Naive thymus-derived CD4-positive, alpha-beta T cell (primary cell): ENCODE measurements at regions of chr14 and their contacts with region 1.

Region 1: DNA sequence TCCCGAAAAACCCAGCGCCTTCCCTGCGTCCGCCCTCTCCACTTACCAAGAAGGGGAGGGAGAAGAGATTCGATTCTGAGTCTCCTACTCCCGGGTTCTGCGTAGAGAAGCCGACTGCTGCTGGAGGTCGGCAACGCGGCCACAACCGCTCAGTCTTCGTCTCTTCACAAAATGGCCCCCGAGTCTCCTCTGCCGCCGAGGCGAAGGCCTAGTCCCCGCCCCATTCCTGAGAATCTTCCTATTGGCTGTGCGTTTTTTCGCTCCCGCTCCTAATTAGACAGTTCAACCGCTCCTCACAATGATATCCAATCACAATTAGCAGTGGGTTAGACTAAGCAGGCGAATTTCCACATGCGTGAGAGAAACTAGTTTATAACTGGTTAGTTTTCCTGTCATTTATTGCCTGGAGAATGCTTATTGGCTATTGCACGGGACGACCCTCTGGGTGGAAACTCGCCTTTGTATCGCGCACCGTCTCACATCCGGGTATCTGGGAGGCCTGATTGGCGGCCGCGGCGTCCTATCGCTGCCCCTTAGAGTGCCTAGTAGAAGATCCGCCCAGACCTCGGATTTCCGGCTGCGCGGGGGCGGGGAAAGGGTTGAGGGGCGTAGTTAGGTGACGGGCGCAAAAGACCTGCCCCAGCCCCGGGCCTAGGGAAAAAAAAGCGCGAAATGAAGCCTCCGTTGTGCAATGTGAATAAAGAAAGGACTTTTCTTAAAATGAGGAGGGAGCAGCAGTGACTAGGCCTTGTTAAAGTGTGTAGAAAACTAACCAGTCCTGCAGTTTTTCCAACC is at the start of gene HNRNPC:
- DNase-seq: peak; percentile 100
- ATAC-seq: peak; percentile 90
- H3K4me3 ChIP-seq: peak within 1 kb of the TSS; percentile 99
- H3K4me3 Mint-ChIP-seq: peak within 1 kb of the TSS; percentile 92 to 100 (median 99)
- H3K27ac ChIP-seq: peak within 1 kb of the TSS; percentile 97
- H3K27ac Mint-ChIP-seq: peak within 1 kb of the TSS; percentile 97 to 100 (median 100)
- H3K4me1 ChIP-seq: peaks cover 19 to 21% of the 10 kb centered on the region in 2 donors
- H3K4me1 Mint-ChIP-seq: peaks cover 21 to 43% (median 37%) of the 10 kb centered on the region in 7 donors
- H3K27me3 ChIP-seq: no peaks in the 10 kb centered on the region
- H3K27me3 Mint-ChIP-seq: no peaks in the 10 kb centered on the region
- total RNA-seq, gene HNRNPC: 469 to 687 (median 532) TPM

Region 2: DNA sequence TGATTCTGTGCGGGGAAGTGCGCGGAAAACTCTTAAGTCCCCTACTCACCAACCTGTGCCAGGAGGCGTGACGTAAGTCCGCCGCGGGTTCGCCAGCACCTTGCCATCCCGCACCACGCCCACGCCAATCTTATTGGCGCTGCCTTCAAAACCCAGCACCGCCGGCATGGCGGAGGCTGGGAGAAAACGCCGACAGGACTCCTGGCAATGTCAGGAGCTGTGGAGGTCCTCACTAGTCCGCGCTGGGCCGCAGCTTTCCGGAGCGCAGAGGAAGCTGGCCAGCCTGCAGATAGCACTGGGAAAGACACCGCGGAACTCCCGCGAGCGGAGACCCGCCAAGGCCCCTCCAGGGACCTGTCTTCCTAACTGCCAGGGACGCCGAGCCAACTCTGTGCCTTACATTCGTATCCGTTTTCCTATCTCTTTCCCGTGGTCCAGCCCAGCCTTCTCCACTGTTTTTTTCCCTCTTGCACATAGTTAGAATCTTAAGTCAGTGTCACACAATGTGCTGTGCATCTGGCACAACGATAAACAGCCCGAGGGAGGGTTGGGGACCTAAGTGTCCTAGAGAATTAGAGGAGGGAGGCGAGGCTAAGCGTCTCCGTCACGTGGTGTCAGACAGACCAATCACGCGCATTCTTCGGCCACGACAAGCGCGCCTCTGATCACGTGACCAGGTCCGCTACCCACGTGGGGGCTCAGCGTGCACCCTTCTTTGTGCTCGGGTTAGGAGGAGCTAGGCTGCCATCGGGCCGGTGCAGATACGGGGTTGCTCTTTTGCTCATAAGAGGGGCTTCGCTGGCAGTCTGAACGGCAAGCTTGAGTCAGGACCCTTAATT is 814.7 kb before region 1 on chr14 and contains the starts of genes APEX1 and OSGEP:
- CTCF ChIA-PET with region 1: no interaction called
- POLR2A ChIA-PET with region 1: no interaction called
- intact Hi-C with region 1: loop called in 1 of 2 experiments (anchors 1 kb)
- DNase-seq: peak; percentile 86 to 99 (median 98)
- ATAC-seq: peak; percentile 88
- H3K4me3 ChIP-seq: peak within 1 kb of the TSS; percentile 80
- H3K4me3 Mint-ChIP-seq: peak within 1 kb of the TSS in 6 of 10 donors; percentile 7 to 43 (median 30)
- H3K27ac ChIP-seq: peak within 1 kb of the TSS; percentile 85
- H3K27ac Mint-ChIP-seq: no peak within 1 kb of the TSS
- H3K4me1 ChIP-seq: peaks cover 13 to 18% of the 10 kb centered on the region in 2 donors
- H3K4me1 Mint-ChIP-seq: peaks cover 12 to 30% (median 19%) of the 10 kb centered on the region in 7 donors
- H3K27me3 ChIP-seq: no peaks in the 10 kb centered on the region
- H3K27me3 Mint-ChIP-seq: no peaks in the 10 kb centered on the region
- total RNA-seq, gene APEX1: 97.4 to 159 (median 129) TPM
- total RNA-seq, gene OSGEP: 54.2 to 77.2 (median 69.1) TPM

Region 3: GRCh38 chr14:21103710-21104447 is 165.6 kb before region 1 on chr14:
- CTCF ChIA-PET with region 1: no interaction called
- POLR2A ChIA-PET with region 1: no interaction called
- intact Hi-C with region 1: loop called (anchors 1 kb)
- DNase-seq: peak; percentile 87 to 94 (median 92)
- ATAC-seq: peak; percentile 92
- H3K4me3 ChIP-seq: peak overlapping the region; percentile 94
- H3K4me3 Mint-ChIP-seq: peak overlapping the region; percentile 74 to 99 (median 91)
- H3K27ac ChIP-seq: peak overlapping the region; percentile 96
- H3K27ac Mint-ChIP-seq: peak overlapping the region; percentile 25 to 97 (median 89)
- H3K4me1 ChIP-seq: peaks cover 3 to 8% of the 10 kb centered on the region in 2 donors
- H3K4me1 Mint-ChIP-seq: peaks cover 23 to 41% (median 26%) of the 10 kb centered on the region in 7 donors
- H3K27me3 ChIP-seq: peaks cover 0 to 4% of the 10 kb centered on the region in 2 donors
- H3K27me3 Mint-ChIP-seq: peaks cover 0 to 11% (median 0%) of the 10 kb centered on the region in 5 donors

Region 4: DNA sequence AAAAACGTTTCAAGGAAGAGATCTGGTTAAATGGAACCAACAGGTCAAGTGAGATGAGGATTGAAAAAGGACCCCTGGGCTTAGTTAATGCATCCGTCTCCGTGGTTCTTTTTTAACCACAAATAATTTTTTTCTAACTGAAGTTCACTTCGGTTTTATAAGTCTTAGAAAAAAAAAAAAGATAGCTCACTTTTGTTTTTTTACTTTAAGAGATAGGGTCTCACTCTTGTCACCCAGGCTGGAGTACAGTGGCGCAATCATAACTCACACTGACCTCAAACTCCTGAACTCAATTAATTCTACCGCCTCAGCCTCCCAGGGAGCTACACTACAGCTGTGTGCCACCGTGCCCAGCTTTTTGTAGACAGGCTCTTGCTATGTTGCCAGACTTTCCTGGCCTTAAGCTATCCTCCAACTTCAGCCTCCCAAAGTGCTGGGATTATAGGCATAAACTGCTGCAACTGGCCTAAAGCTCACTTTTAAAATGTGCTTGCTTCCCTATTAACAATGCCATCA is 12.0 kb before region 1 on chr14:
- CTCF ChIA-PET with region 1: interaction called, 3 read pairs
- POLR2A ChIA-PET with region 1: interaction called, 75 read pairs
- intact Hi-C with region 1: no loop called
- DNase-seq: no peak
- ATAC-seq: peak; percentile 30
- H3K4me3 ChIP-seq: peak overlapping the region; percentile 22
- H3K4me3 Mint-ChIP-seq: peak overlapping the region; percentile 64 to 79 (median 69)
- H3K27ac ChIP-seq: peak overlapping the region; percentile 10
- H3K27ac Mint-ChIP-seq: peak overlapping the region in 8 of 9 donors; percentile 44 to 84 (median 62)
- H3K4me1 ChIP-seq: peaks cover 58 to 59% of the 10 kb centered on the region in 2 donors
- H3K4me1 Mint-ChIP-seq: peaks cover 53 to 84% (median 68%) of the 10 kb centered on the region in 7 donors
- H3K27me3 ChIP-seq: no peaks in the 10 kb centered on the region
- H3K27me3 Mint-ChIP-seq: no peaks in the 10 kb centered on the region

Region 5: GRCh38 chr14:21437063-21437901 is 167.8 kb after region 1 on chr14:
- CTCF ChIA-PET with region 1: interaction called, 3 read pairs
- POLR2A ChIA-PET with region 1: interaction called, 4 read pairs
- intact Hi-C with region 1: loop called (anchors 1 kb)
- DNase-seq: peak; percentile 93 to 100 (median 99)
- ATAC-seq: peak; percentile 100
- H3K4me3 ChIP-seq: peak overlapping the region; percentile 87
- H3K4me3 Mint-ChIP-seq: peak overlapping the region; percentile 86 to 97 (median 92)
- H3K27ac ChIP-seq: peak overlapping the region; percentile 94
- H3K27ac Mint-ChIP-seq: peak overlapping the region; percentile 90 to 98 (median 94)
- H3K4me1 ChIP-seq: peaks cover 13 to 22% of the 10 kb centered on the region in 2 donors
- H3K4me1 Mint-ChIP-seq: peaks cover 43 to 86% (median 68%) of the 10 kb centered on the region in 7 donors
- H3K27me3 ChIP-seq: no peaks in the 10 kb centered on the region
- H3K27me3 Mint-ChIP-seq: no peaks in the 10 kb centered on the region

Region 6: GRCh38 chr14:21510735-21511657 is 241.5 kb after region 1 on chr14 and contains the start of gene METTL3:
- CTCF ChIA-PET with region 1: no interaction called
- POLR2A ChIA-PET with region 1: interaction called, 3 read pairs
- intact Hi-C with region 1: loop called (anchors 1 kb)
- DNase-seq: peak; percentile 78 to 95 (median 90)
- ATAC-seq: peak; percentile 100
- H3K4me3 ChIP-seq: peak within 1 kb of the TSS; percentile 94
- H3K4me3 Mint-ChIP-seq: peak within 1 kb of the TSS; percentile 92 to 100 (median 99)
- H3K27ac ChIP-seq: peak within 1 kb of the TSS; percentile 87
- H3K27ac Mint-ChIP-seq: peak within 1 kb of the TSS; percentile 97 to 99 (median 98)
- H3K4me1 ChIP-seq: peaks cover 15 to 21% of the 10 kb centered on the region in 2 donors
- H3K4me1 Mint-ChIP-seq: peaks cover 20 to 47% (median 42%) of the 10 kb centered on the region in 7 donors
- H3K27me3 ChIP-seq: no peaks in the 10 kb centered on the region
- H3K27me3 Mint-ChIP-seq: peaks cover 0 to 1% (median 0%) of the 10 kb centered on the region in 5 donors
- total RNA-seq, gene METTL3: 43.6 to 108 (median 75.3) TPM

Region 7: DNA sequence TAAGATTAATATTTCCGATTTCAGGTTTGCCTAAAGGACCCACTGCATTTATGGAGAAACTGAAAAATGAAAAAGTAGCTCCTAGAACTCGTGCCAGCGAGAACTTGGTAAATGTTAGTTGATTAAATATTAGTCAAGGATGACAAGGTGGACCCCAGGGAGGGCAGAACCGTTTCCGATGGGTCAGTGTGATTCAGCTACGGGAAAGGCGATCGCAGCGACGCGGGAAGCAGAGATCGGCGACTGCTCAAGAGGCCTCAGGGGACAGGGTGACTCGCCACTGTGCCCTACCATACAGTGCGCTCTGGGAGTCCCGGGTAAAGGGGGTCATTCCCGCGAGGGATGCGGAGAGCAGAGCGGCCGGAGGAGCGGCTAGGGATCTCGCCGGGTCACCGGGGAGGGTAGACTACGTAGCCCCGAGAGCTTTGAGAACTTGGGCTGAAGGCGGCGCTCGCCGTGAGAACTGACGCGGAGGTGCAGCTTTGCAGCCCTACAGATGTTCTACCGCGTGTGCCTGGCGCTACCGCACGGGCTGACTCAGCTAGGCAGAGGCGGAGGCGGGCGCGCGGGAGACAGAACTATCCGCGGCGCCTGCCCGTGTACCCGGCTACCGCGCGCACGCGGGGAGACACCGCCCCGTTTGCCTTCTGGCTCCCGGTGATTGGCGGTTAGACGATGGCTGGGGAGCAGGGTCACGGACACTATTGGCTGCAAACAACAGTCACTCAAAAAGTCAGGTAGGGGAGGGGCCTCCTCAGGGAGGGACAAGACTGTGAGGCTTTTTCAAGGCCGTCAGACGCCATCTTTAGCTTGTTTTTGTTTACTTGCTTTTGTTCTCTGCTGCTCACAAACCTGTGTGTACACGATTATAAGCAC is 1737.3 kb after region 1 on chr14:
- CTCF ChIA-PET with region 1: no interaction called
- POLR2A ChIA-PET with region 1: no interaction called
- intact Hi-C with region 1: loop called in 1 of 2 experiments (anchors 5 kb)
- DNase-seq: peak; percentile 88 to 99 (median 98)
- ATAC-seq: peak; percentile 97
- H3K4me3 ChIP-seq: peak overlapping the region; percentile 94
- H3K4me3 Mint-ChIP-seq: peak overlapping the region; percentile 91 to 100 (median 96)
- H3K27ac ChIP-seq: peak overlapping the region; percentile 86
- H3K27ac Mint-ChIP-seq: peak overlapping the region; percentile 87 to 99 (median 98)
- H3K4me1 ChIP-seq: peaks cover 9 to 25% of the 10 kb centered on the region in 2 donors
- H3K4me1 Mint-ChIP-seq: peaks cover 12 to 60% (median 48%) of the 10 kb centered on the region in 7 donors
- H3K27me3 ChIP-seq: no peaks in the 10 kb centered on the region
- H3K27me3 Mint-ChIP-seq: no peaks in the 10 kb centered on the region